ENCODE measurements at regions of chr5 and their contacts with region 1.

Region 1: GRCh38 chr5:172902497-172903200 is 56.6 kb upstream of the RPL26L1 start:
- DNase-seq: peak; percentile 91 to 97
- H3K4me3 ChIP-seq: no peak overlapping the region
- H3K4me3 Mint-ChIP-seq: peak overlapping the region; percentile 52
- H3K27ac Mint-ChIP-seq: peak overlapping the region; percentile 91
- H3K4me1 ChIP-seq: peaks cover 70% of the 10 kb centered on the region
- H3K4me1 Mint-ChIP-seq: peaks cover 50% of the 10 kb centered on the region
- H3K27me3 ChIP-seq: no peaks in the 10 kb centered on the region
- H3K27me3 Mint-ChIP-seq: no peaks in the 10 kb centered on the region
- CTCF ChIP-seq: peak; percentile 56 to 95

Region 2: GRCh38 chr5:172714491-172715421 is 187.9 kb before region 1 on chr5:
- CTCF ChIA-PET with region 1: interaction called, 12 read pairs
- POLR2A ChIA-PET with region 1: interaction called, 4 read pairs
- intact Hi-C with region 1: loop called (anchors 1 kb)
- DNase-seq: peak; percentile 79 to 80
- H3K4me3 ChIP-seq: no peak overlapping the region
- H3K4me3 Mint-ChIP-seq: no peak overlapping the region
- H3K27ac Mint-ChIP-seq: no peak overlapping the region
- H3K4me1 ChIP-seq: peaks cover 23% of the 10 kb centered on the region
- H3K4me1 Mint-ChIP-seq: peaks cover 6% of the 10 kb centered on the region
- H3K27me3 ChIP-seq: no peaks in the 10 kb centered on the region
- H3K27me3 Mint-ChIP-seq: no peaks in the 10 kb centered on the region
- CTCF ChIP-seq: peak; percentile 84 to 85

Region 3: GRCh38 chr5:172770675-172771438 is 131.8 kb before region 1 on chr5 and contains the start of gene DUSP1:
- CTCF ChIA-PET with region 1: interaction called, 8 read pairs
- POLR2A ChIA-PET with region 1: interaction called, 30 read pairs
- intact Hi-C with region 1: loop called (anchors 1 kb)
- DNase-seq: peak; percentile 98
- H3K4me3 ChIP-seq: peak within 1 kb of the TSS; percentile 96
- H3K4me3 Mint-ChIP-seq: peak within 1 kb of the TSS; percentile 89
- H3K27ac Mint-ChIP-seq: peak within 1 kb of the TSS; percentile 96
- H3K4me1 ChIP-seq: peaks cover 48% of the 10 kb centered on the region
- H3K4me1 Mint-ChIP-seq: peaks cover 35% of the 10 kb centered on the region
- H3K27me3 ChIP-seq: no peaks in the 10 kb centered on the region
- H3K27me3 Mint-ChIP-seq: no peaks in the 10 kb centered on the region
- CTCF ChIP-seq: peak; percentile 47 to 53
- total RNA-seq, gene DUSP1: 28.3 and 29.2 TPM in 2 replicates

Region 4: GRCh38 chr5:172860520-172861443 is 41.9 kb before region 1 on chr5:
- CTCF ChIA-PET with region 1: interaction called, 7 read pairs
- POLR2A ChIA-PET with region 1: interaction called, 14 read pairs
- intact Hi-C with region 1: loop called (anchors 1 kb)
- DNase-seq: no peak
- H3K4me3 ChIP-seq: no peak overlapping the region
- H3K4me3 Mint-ChIP-seq: peak overlapping the region; percentile 67
- H3K27ac Mint-ChIP-seq: peak overlapping the region; percentile 97
- H3K4me1 ChIP-seq: peaks cover 74% of the 10 kb centered on the region
- H3K4me1 Mint-ChIP-seq: peaks cover 67% of the 10 kb centered on the region
- H3K27me3 ChIP-seq: no peaks in the 10 kb centered on the region
- H3K27me3 Mint-ChIP-seq: no peaks in the 10 kb centered on the region
- CTCF ChIP-seq: no peak

Region 5: GRCh38 chr5:172958331-172959046 is 55.8 kb after region 1 on chr5:
- CTCF ChIA-PET with region 1: interaction called, 10 read pairs
- POLR2A ChIA-PET with region 1: interaction called, 3 read pairs
- intact Hi-C with region 1: no loop called
- DNase-seq: peak; percentile 75 to 76
- H3K4me3 ChIP-seq: peak overlapping the region; percentile 96
- H3K4me3 Mint-ChIP-seq: peak overlapping the region; percentile 100
- H3K27ac Mint-ChIP-seq: peak overlapping the region; percentile 98
- H3K4me1 ChIP-seq: peaks cover 15% of the 10 kb centered on the region
- H3K4me1 Mint-ChIP-seq: peaks cover 7% of the 10 kb centered on the region
- H3K27me3 ChIP-seq: no peaks in the 10 kb centered on the region
- H3K27me3 Mint-ChIP-seq: no peaks in the 10 kb centered on the region
- CTCF ChIP-seq: no peak